GM12878 (cell line): ENCODE measurements at regions of chr11 and their contacts with region 1.

Region 1: DNA sequence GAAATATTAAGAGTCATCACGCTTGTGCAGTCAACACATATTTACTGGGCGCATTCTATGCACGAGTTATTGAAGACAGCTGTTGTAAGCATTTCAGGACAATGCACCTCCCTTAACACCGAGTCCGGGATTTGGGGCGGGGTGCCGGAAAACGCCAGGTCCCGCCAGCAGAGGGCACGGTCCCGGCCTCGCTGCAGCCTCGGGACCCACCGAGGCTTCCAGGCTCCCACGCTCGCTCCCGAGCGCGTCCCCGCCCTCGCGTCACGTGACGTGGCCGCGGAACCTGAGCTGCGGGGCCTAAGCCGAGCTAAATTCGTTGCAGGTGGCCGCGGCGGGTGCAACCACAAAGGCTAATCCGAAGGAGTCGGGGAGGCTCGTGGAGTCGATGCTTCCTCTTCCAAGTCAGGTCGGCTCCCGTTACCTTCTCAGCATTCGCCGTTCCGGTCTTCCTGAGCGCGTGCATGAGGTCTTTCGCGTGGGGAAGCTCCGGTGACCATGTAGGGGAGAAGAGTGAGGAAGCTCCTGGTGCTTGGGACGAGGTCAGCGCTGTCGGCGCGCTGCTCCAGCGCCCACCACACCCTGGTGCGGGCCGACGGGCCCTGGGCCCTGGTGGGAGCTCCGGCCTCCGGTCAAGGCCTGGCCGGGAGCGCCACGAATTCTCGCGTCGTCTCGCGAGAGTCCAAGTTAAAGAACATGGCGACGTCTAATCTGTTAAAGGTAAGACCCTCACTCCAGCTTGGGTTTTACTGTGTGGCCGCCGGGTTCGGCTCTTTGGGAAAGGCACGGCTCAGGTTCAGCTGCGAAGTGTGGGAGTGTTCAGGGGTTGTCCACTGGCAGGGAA is at the start of gene CUL5:
- DNase-seq: peak; percentile 60
- ATAC-seq: peak; percentile 89
- H3K4me3 ChIP-seq: peak within 1 kb of the TSS; percentile 80
- H3K27ac ChIP-seq: peak within 1 kb of the TSS; percentile 80
- H3K4me1 ChIP-seq: no peaks in the 10 kb centered on the region
- H3K27me3 ChIP-seq: no peaks in the 10 kb centered on the region
- CTCF ChIP-seq: peak; percentile 86 to 93 (median 90)
- EP300 ChIP-seq: no peak; a peak in 1 of 4 replicates
- POLR2A ChIP-seq: peak; percentile 94
- RAD21 ChIP-seq: peak; percentile 54
- polyA plus RNA-seq, gene CUL5: 9.1 to 11.8 TPM

Region 2: DNA sequence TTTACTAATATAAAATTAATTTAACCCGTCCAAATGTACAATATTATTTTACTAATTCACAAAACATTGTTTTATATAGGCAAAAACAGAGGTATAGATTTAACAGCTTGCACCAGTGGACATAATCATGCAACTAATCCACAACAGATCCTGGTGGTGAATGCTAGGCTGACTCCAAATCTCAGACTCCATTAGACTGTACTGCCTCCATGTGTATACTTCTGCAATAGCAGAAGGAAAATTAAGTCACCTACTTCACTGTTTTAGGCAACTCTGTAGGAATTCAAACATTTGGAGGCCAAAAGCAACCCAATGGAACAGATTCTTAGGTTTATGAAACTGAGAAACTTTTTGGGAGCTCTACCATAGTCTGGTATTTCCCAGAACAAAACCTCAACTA is 110.6 kb before region 1 on chr11:
- CTCF ChIA-PET with region 1: no interaction called
- POLR2A ChIA-PET with region 1: no interaction called
- RAD21 ChIA-PET with region 1: no interaction called
- SMC1A ChIA-PET with region 1: no interaction called
- in situ Hi-C with region 1: no loop called
- intact Hi-C with region 1: no loop called
- DNase-seq: peak; percentile 24
- ATAC-seq: peak; percentile 93
- H3K4me3 ChIP-seq: no peak overlapping the region
- H3K27ac ChIP-seq: no peak overlapping the region
- H3K4me1 ChIP-seq: no peaks in the 10 kb centered on the region; the same call in 1 of the 2 replicates
- H3K27me3 ChIP-seq: no peaks in the 10 kb centered on the region
- CTCF ChIP-seq: peak; percentile 63 to 82 (median 67); a peak in 5 of 6 replicates
- EP300 ChIP-seq: no peak
- POLR2A ChIP-seq: no peak
- RAD21 ChIP-seq: peak; percentile 92

Region 3: GRCh38 chr11:108019870-108020540 is 11.1 kb after region 1 on chr11:
- CTCF ChIA-PET with region 1: interaction called, 19 read pairs
- POLR2A ChIA-PET with region 1: interaction called, 7 read pairs
- RAD21 ChIA-PET with region 1: interaction called, 30 read pairs
- SMC1A ChIA-PET with region 1: interaction called, 13 read pairs
- in situ Hi-C with region 1: no loop called
- intact Hi-C with region 1: no loop called
- DNase-seq: no peak
- ATAC-seq: no peak
- H3K4me3 ChIP-seq: no peak overlapping the region
- H3K27ac ChIP-seq: no peak overlapping the region
- H3K4me1 ChIP-seq: peaks cover 1% of the 10 kb centered on the region; the same call in 1 of the 2 replicates
- H3K27me3 ChIP-seq: no peaks in the 10 kb centered on the region
- CTCF ChIP-seq: no peak
- EP300 ChIP-seq: no peak
- POLR2A ChIP-seq: no peak
- RAD21 ChIP-seq: no peak

Region 4: GRCh38 chr11:108037636-108038035 is 28.8 kb after region 1 on chr11:
- CTCF ChIA-PET with region 1: interaction called, 21 read pairs
- POLR2A ChIA-PET with region 1: no interaction called
- RAD21 ChIA-PET with region 1: no interaction called
- SMC1A ChIA-PET with region 1: interaction called, 5 read pairs
- in situ Hi-C with region 1: no loop called
- intact Hi-C with region 1: no loop called
- DNase-seq: no peak
- ATAC-seq: no peak
- H3K4me3 ChIP-seq: no peak overlapping the region
- H3K27ac ChIP-seq: no peak overlapping the region
- H3K4me1 ChIP-seq: no peaks in the 10 kb centered on the region; the same call in 1 of the 2 replicates
- H3K27me3 ChIP-seq: no peaks in the 10 kb centered on the region
- CTCF ChIP-seq: no peak
- EP300 ChIP-seq: no peak
- POLR2A ChIP-seq: no peak
- RAD21 ChIP-seq: no peak

Region 5: GRCh38 chr11:108121274-108122155 is 112.6 kb after region 1 on chr11 and contains the start of gene ACAT1:
- CTCF ChIA-PET with region 1: interaction called, 15 read pairs
- POLR2A ChIA-PET with region 1: interaction called, 3 read pairs
- RAD21 ChIA-PET with region 1: interaction called, 5 read pairs
- SMC1A ChIA-PET with region 1: interaction called, 6 read pairs
- in situ Hi-C with region 1: no loop called
- intact Hi-C with region 1: no loop called
- DNase-seq: peak; percentile 71
- ATAC-seq: peak; percentile 98
- H3K4me3 ChIP-seq: peak within 1 kb of the TSS; percentile 73
- H3K27ac ChIP-seq: peak within 1 kb of the TSS; percentile 65
- H3K4me1 ChIP-seq: peaks cover 10% of the 10 kb centered on the region
- H3K27me3 ChIP-seq: no peaks in the 10 kb centered on the region
- CTCF ChIP-seq: peak; percentile 7 to 39 (median 10); a peak in 1 of 6 replicates
- EP300 ChIP-seq: no peak
- POLR2A ChIP-seq: peak; percentile 98
- RAD21 ChIP-seq: no peak
- polyA plus RNA-seq, gene ACAT1: 58.2 to 93.5 TPM

Region 6: GRCh38 chr11:108654994-108655631 is 646.2 kb after region 1 on chr11:
- CTCF ChIA-PET with region 1: interaction called, 3 read pairs
- POLR2A ChIA-PET with region 1: no interaction called
- RAD21 ChIA-PET with region 1: interaction called, 4 read pairs
- SMC1A ChIA-PET with region 1: interaction called, 3 read pairs
- in situ Hi-C with region 1: loop called (anchors 10 kb)
- intact Hi-C with region 1: loop called (anchors 10 kb)
- DNase-seq: no peak
- ATAC-seq: peak; percentile 85
- H3K4me3 ChIP-seq: no peak overlapping the region
- H3K27ac ChIP-seq: no peak overlapping the region
- H3K4me1 ChIP-seq: no peaks in the 10 kb centered on the region
- H3K27me3 ChIP-seq: no peaks in the 10 kb centered on the region
- CTCF ChIP-seq: peak; percentile 49 to 77 (median 56)
- EP300 ChIP-seq: no peak
- POLR2A ChIP-seq: no peak
- RAD21 ChIP-seq: peak; percentile 85